ENCODE measurements at regions of chr22 and their contacts with region 1.

Region 1: DNA sequence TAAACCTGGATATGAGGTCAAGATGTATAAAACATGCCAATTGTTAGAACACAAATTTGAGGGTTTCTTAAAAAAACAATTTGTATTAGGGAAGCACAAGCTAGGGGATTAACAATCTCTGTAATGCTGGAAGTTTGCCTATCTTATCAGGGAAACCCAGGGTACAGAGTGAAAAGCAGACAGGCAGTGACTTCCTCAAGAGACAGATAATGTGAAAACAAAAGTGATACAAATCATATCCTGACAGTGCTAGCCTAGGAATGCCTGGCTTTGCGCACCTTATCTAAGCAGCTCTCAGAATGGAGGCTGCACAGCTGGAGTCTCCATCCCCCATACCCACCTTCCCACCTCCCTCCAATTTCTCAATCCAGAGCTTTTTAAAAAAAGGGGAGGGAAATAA is 22.5 kb upstream of the RBX1 start:
- DNase-seq: no peak
- ATAC-seq: no peak
- H3K4me3 ChIP-seq: no peak overlapping the region
- H3K27ac ChIP-seq: no peak overlapping the region
- H3K4me1 ChIP-seq: no peaks in the 10 kb centered on the region
- H3K27me3 ChIP-seq: no peaks in the 10 kb centered on the region
- CTCF ChIP-seq: no peak
- POLR2A ChIP-seq: no peak

Region 2: DNA sequence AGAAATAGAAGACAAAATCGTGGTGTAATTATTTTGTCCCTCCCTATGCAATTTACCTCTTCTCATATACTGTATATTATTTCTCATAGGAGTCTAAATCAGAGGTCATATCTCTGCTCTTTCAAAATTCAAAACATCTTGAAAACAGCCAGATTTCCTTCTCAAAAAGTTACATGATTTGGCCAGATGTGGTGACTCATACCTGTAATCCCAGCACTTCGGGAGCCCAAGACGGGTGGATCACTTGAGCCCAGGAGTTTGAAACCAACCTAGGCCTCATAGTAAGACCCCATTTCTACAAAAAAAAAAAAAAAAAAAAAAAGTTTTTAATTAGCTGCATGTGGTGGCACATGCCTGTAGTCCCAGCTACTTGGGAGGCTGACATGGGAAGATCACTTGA is 37.8 kb before region 1 on chr22:
- in situ Hi-C with region 1: no loop called
- intact Hi-C with region 1: no loop called
- DNase-seq: no peak
- ATAC-seq: no peak
- H3K4me3 ChIP-seq: no peak overlapping the region
- H3K27ac ChIP-seq: no peak overlapping the region
- H3K4me1 ChIP-seq: no peaks in the 10 kb centered on the region
- H3K27me3 ChIP-seq: no peaks in the 10 kb centered on the region
- CTCF ChIP-seq: no peak
- POLR2A ChIP-seq: no peak

Region 3: GRCh38 chr22:41197038-41197972 is 268.6 kb after region 1 on chr22:
- in situ Hi-C with region 1: no loop called
- intact Hi-C with region 1: loop called (anchors 5 kb)
- DNase-seq: peak; percentile 57 to 76
- ATAC-seq: peak; percentile 90 to 91
- H3K4me3 ChIP-seq: peak overlapping the region; percentile 85 to 98 (median 93)
- H3K27ac ChIP-seq: peak overlapping the region; percentile 73 to 78 (median 76)
- H3K4me1 ChIP-seq: peaks cover 8 to 9% of the 10 kb centered on the region in 2 donors
- H3K27me3 ChIP-seq: no peaks in the 10 kb centered on the region
- CTCF ChIP-seq: peak in 2 of 5 experiments; percentile 23 to 39
- POLR2A ChIP-seq: peak; percentile 26 to 49

Measured in gastrocnemius medialis (tissue), 4 donors.